ENCODE measurements at regions of chr2 and their contacts with region 1.

Region 1: GRCh38 chr2:120552800-120553481 is 182.7 kb upstream of the GLI2 start:
- DNase-seq: peak; percentile 41 to 91
- H3K4me3 ChIP-seq: peak overlapping the region; percentile 31 to 51 (median 37); a peak in 5 of 8 replicates
- H3K27ac ChIP-seq: no peak overlapping the region
- H3K4me1 ChIP-seq: no peaks in the 10 kb centered on the region; a peak in 1 of 7 replicates
- H3K27me3 ChIP-seq: peaks cover 4 to 25% (median 19%) of the 10 kb centered on the region in 4 experiments
- CTCF ChIP-seq: peak; percentile 88 to 94 (median 88)
- EP300 ChIP-seq: no peak
- POLR2A ChIP-seq: no peak
- RAD21 ChIP-seq: peak; percentile 68 to 79

Region 2: DNA sequence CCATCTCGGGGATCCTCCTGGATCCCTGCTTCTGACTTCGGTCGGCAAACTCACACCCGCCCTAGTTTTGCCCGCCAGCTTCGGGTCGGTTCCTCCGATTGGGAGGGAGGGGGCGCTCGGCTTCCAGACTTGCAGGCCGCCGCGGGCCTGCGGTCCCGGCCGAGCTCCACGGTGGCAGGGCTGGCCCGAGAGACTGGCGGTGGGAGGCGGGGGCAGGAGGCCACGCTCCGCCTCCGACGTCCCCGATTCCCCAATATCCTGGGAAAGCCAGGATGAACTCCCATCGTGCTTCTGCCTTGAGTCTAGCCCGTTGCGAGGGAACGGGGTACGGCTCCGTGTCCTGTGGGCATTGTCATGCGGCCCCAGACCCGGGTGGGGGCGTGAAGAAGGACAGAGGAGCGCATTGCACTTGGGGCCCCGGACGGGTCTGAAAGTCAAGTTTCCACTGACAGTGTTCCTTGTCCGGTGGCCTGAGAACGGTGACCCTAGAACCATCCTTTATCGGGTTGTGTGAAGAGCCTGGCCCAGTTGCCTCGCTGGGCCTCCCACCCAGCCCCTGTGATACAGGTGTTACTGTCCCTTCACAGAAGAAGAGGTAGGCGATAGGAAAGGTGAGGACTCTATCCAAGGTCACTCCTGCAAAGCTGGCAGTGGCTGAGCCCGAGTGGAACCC is 209.4 kb before region 1 on chr2:
- CTCF ChIA-PET with region 1: interaction called, 28 read pairs
- POLR2A ChIA-PET with region 1: no interaction called
- DNase-seq: peak; percentile 71 to 89
- H3K4me3 ChIP-seq: peak overlapping the region in 3 of 4 experiments; percentile 9 to 57 (median 11); a peak in 3 of 8 replicates
- H3K27ac ChIP-seq: no peak overlapping the region
- H3K4me1 ChIP-seq: peaks cover 5 to 28% (median 13%) of the 10 kb centered on the region in 4 experiments
- H3K27me3 ChIP-seq: peaks cover 45 to 76% (median 67%) of the 10 kb centered on the region in 4 experiments
- CTCF ChIP-seq: peak in 2 of 3 experiments; percentile 91 to 97; a peak in 3 of 4 replicates
- EP300 ChIP-seq: 0 out of 3 replicates have a peak, but pooled peaks of 1 of the 2 experiments have one; percentile 27
- POLR2A ChIP-seq: no peak
- RAD21 ChIP-seq: peak; percentile 98 to 99

Region 3: GRCh38 chr2:120511947-120512710 is 40.8 kb before region 1 on chr2:
- CTCF ChIA-PET with region 1: interaction called, 17 read pairs
- POLR2A ChIA-PET with region 1: no interaction called
- DNase-seq: no peak
- H3K4me3 ChIP-seq: no peak overlapping the region
- H3K27ac ChIP-seq: no peak overlapping the region
- H3K4me1 ChIP-seq: peaks cover 0 to 4% (median 1%) of the 10 kb centered on the region in 4 experiments; a peak in 3 of 7 replicates
- H3K27me3 ChIP-seq: peaks cover 0 to 14% (median 6%) of the 10 kb centered on the region in 4 experiments; a peak in 3 of 7 replicates
- CTCF ChIP-seq: peak; percentile 24 to 55 (median 44); a peak in 3 of 4 replicates
- EP300 ChIP-seq: no peak
- POLR2A ChIP-seq: no peak
- RAD21 ChIP-seq: peak; percentile 0 to 4; a peak in 1 of 4 replicates

Region 4: DNA sequence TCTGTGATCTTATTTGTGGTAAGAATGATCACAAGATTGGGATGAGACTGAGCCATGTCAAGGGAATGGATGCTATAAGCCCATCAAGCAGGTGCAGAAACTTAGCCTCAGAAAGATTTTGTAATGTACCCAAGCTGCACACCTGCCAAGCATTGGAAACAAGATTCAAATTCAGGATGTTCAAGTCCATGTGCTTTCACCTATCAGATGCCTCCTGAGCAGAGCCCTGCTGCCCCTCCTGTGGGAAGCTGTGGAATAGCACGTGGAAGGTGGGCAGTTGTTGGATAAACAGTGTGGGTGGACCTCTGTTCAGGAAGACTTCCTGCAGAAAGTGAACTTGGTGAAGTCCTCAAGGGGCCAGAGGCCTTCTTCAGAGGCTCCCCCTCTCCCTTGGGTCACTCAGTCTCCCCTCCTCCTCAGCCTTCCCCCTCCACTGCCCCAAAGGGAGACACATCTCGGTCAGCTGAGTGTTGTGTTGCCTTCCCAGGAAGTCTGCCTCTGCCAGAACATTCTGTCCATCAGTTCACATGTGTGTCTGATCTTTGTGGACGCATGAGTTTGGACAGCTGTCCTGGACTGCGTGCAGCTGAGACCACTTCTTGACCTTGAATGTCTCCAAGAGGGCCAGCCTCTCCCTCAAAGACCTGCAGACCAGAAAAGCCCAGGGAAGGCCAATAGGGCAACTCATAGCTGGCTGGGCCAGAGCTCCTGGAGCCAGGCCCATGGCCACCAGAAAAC is 20.9 kb before region 1 on chr2:
- CTCF ChIA-PET with region 1: interaction called, 24 read pairs
- POLR2A ChIA-PET with region 1: no interaction called
- DNase-seq: no peak
- H3K4me3 ChIP-seq: no peak overlapping the region
- H3K27ac ChIP-seq: no peak overlapping the region
- H3K4me1 ChIP-seq: no peaks in the 10 kb centered on the region
- H3K27me3 ChIP-seq: peaks cover 0 to 7% (median 3%) of the 10 kb centered on the region in 4 experiments; a peak in 3 of 7 replicates
- CTCF ChIP-seq: no peak
- EP300 ChIP-seq: no peak
- POLR2A ChIP-seq: no peak
- RAD21 ChIP-seq: no peak

Region 5: DNA sequence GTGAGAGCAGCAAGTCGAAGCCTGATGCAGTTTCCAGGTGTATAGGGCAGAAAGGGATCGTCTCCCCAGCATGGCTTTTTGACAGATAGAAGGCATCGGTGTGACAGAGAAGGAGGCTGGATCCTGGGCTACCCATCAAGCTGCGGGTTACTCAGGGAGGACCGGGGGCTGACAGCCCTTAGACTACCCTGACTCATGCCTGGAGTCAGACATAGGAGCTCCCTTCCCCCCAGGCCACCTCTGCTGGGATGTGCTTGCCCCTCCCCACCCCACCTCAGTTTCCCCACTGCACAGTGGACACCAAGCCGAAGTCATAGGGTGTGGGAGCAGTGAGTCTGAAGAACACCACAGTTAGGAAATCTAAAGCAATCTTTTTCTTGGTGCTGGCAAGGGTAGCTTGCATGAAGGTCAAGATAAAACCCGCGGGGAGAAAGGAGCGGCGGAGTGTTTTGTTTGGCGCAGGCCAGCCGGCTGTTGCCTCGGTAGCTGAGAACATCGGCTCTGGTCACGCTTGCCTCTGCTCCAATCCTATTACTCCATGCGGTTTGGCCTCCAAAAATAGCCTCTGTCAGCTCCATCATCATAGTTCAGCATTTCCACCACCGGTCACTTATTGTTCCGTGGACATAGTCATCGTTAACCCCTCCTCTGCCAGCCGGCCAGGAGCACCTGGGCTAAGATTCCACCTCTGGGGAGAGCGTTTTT is 13.5 kb after region 1 on chr2:
- CTCF ChIA-PET with region 1: interaction called, 38 read pairs
- POLR2A ChIA-PET with region 1: interaction called, 4 read pairs
- DNase-seq: no peak
- H3K4me3 ChIP-seq: no peak overlapping the region
- H3K27ac ChIP-seq: no peak overlapping the region
- H3K4me1 ChIP-seq: peaks cover 0 to 4% (median 3%) of the 10 kb centered on the region in 4 experiments; a peak in 4 of 7 replicates
- H3K27me3 ChIP-seq: peaks cover 0 to 6% (median 3%) of the 10 kb centered on the region in 4 experiments; a peak in 3 of 7 replicates
- CTCF ChIP-seq: no peak
- EP300 ChIP-seq: no peak
- POLR2A ChIP-seq: no peak
- RAD21 ChIP-seq: no peak

Region 6: GRCh38 chr2:120669121-120669952 is 116.4 kb after region 1 on chr2:
- CTCF ChIA-PET with region 1: interaction called, 20 read pairs
- POLR2A ChIA-PET with region 1: no interaction called
- DNase-seq: peak in 1 of 2 experiments; percentile 78
- H3K4me3 ChIP-seq: no peak overlapping the region
- H3K27ac ChIP-seq: no peak overlapping the region
- H3K4me1 ChIP-seq: peaks cover 0 to 6% (median 0%) of the 10 kb centered on the region in 4 experiments; a peak in 2 of 7 replicates
- H3K27me3 ChIP-seq: peaks cover 0 to 22% (median 19%) of the 10 kb centered on the region in 4 experiments; a peak in 6 of 7 replicates
- CTCF ChIP-seq: peak; percentile 70 to 89 (median 86); a peak in 3 of 4 replicates
- EP300 ChIP-seq: no peak
- POLR2A ChIP-seq: no peak
- RAD21 ChIP-seq: peak; percentile 55 to 70

Region 7: DNA sequence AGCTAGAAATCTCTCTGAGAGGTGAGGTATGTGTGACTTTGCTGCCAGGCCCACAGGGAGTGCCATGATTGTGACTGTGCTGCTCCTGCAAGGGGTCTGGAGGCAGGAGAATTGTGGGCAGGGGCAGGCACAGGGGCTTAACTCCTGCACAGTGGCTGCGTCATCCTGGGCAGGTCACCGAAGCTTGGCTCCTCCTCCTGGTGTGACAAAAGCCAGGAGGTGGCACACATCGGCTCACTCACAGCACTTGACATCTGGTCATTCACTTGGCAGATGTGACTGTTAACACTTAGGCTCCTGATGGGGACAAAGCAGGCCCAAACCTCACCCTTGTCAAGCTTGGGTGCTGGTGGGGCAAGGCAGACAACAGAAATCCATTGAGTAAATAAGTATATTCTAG is 146.4 kb after region 1 on chr2:
- CTCF ChIA-PET with region 1: no interaction called
- POLR2A ChIA-PET with region 1: no interaction called
- DNase-seq: no peak
- H3K4me3 ChIP-seq: no peak overlapping the region
- H3K27ac ChIP-seq: no peak overlapping the region
- H3K4me1 ChIP-seq: peaks cover 6 to 12% (median 9%) of the 10 kb centered on the region in 4 experiments
- H3K27me3 ChIP-seq: peaks cover 0 to 18% (median 13%) of the 10 kb centered on the region in 4 experiments; a peak in 5 of 7 replicates
- CTCF ChIP-seq: no peak
- EP300 ChIP-seq: no peak
- POLR2A ChIP-seq: no peak
- RAD21 ChIP-seq: no peak